ENCODE measurements at regions of chr1 and their contacts with region 1.

Region 1: DNA sequence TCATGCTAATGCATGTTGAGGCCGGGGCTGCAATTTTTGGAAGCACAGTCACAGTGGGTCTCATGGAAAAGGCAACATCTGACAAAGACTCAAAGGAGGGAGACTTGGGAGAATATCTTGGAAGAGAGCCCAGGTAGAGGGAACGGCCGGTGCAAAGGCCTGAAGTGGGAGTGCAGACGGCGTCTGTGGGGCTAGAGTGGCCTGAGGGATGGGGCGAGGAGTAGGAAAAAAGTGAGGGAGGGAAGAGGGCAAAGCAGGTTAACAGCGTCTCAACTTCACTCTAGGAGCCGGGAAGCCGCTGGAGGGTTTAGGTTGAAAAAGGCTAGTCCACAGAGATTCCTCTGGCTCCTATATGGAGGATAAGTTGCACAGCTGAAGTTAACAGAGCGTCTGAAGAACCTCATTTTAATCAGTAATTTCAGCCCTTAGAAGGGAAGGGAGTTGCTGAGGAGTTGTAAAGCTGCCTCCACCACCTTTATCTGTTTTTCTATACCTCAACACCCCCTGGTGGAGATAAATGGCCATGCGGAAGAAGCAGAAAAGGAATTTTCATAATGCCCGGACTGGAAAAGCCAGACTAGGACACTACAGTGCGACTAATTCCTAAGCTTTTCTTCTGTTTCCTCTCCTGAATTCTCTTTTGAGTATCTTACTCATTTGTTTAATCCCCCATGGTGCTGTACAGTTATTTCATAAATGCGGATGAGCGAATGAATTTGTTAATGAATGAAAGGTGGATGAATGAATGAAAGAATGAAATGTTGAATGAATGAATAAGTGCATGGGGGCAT is 78.7 kb upstream of the ZNF281 start:
- DNase-seq: peak in 1 of 2 donors; percentile 43
- ATAC-seq: peak in 6 of 8 donors; percentile 38 to 65 (median 54)
- H3K4me3 ChIP-seq: no peak overlapping the region
- H3K27ac ChIP-seq: no peak overlapping the region
- H3K4me1 ChIP-seq: peaks cover 0 to 11% (median 0%) of the 10 kb centered on the region in 9 donors
- H3K27me3 ChIP-seq: peaks cover 0 to 26% (median 8%) of the 10 kb centered on the region in 7 donors
- CTCF ChIP-seq: peak; percentile 56 to 81 (median 78)

Region 2: DNA sequence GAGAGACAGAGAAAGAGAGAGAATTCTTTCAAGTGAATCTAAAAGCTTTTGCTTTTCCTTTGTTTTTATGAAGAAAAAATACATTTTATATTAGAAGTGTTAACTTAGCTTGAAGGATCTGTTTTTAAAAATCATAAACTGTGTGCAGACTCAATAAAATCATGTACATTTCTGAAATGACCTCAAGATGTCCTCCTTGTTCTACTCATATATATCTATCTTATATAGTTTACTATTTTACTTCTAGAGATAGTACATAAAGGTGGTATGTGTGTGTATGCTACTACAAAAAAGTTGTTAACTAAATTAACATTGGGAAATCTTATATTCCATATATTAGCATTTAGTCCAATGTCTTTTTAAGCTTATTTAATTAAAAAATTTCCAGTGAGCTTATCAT is 1732.1 kb before region 1 on chr1:
- intact Hi-C with region 1: loop called in 1 of 10 experiments (anchors 5 kb)
- DNase-seq: no peak
- ATAC-seq: no peak
- H3K4me3 ChIP-seq: no peak overlapping the region
- H3K27ac ChIP-seq: no peak overlapping the region
- H3K4me1 ChIP-seq: peaks cover 0 to 7% (median 0%) of the 10 kb centered on the region in 9 donors
- H3K27me3 ChIP-seq: no peaks in the 10 kb centered on the region
- CTCF ChIP-seq: peak in 8 of 9 donors; percentile 29 to 65 (median 46)

Region 3: DNA sequence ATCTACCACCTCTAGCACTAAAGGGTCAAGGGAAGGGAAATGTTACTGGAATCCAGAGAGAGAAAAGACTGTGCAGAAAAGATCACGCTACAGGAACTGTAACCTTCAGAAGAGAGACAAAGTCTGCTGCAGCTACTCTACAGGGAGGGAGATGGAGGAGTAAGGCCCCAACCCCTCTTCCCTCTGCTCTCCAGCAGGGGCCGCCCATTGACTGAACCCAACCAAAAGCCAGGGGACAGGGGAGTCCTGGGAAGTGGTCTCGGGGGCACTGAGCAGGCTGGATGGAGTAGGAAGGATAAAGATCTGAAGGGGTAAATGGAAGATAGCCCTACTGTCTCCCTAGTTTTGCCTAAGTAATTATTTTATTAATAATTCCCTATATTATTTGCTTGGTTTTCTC is 533.9 kb before region 1 on chr1:
- intact Hi-C with region 1: loop called in 1 of 10 experiments (anchors 10 kb)
- DNase-seq: no peak
- ATAC-seq: peak in 2 of 8 donors; percentile 56 to 61
- H3K4me3 ChIP-seq: no peak overlapping the region
- H3K27ac ChIP-seq: no peak overlapping the region
- H3K4me1 ChIP-seq: no peaks in the 10 kb centered on the region
- H3K27me3 ChIP-seq: no peaks in the 10 kb centered on the region
- CTCF ChIP-seq: peak; percentile 15 to 58 (median 40)

Region 4: DNA sequence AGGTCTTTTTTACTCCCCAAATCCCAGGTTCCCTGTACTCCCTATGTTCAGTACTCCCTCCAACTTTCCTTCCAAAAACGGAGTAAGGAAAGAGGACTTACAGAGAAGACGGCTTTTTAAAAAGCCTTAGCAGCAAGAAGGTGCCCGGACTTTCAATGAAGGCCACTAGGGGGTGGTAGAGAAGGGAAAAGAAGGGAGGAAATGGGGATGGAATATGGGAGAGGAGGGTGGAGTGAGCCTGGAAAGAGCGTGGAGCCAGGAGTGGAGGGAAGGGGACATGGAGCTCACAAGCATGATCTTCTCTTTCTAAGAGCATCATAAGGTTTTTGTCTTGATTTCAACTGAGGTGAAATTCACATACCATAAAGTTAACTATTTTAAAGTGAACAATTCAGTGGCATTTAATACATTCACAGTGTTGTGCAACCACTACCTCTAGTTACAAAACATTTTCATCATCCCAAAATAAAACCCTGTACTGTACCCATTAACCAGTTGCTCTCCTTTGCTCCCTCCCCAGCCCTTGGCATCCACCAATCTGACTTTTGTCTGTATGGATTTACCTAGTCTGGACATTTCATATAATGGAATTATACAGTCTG is 208.7 kb before region 1 on chr1:
- intact Hi-C with region 1: loop called in 4 of 10 experiments (anchors 2 to 10 kb)
- DNase-seq: peak in 1 of 2 donors; percentile 16
- ATAC-seq: no peak
- H3K4me3 ChIP-seq: no peak overlapping the region
- H3K27ac ChIP-seq: no peak overlapping the region
- H3K4me1 ChIP-seq: peaks cover 0 to 9% (median 0%) of the 10 kb centered on the region in 9 donors
- H3K27me3 ChIP-seq: peaks cover 0 to 4% (median 0%) of the 10 kb centered on the region in 7 donors
- CTCF ChIP-seq: peak; percentile 17 to 66 (median 53)

Region 5: DNA sequence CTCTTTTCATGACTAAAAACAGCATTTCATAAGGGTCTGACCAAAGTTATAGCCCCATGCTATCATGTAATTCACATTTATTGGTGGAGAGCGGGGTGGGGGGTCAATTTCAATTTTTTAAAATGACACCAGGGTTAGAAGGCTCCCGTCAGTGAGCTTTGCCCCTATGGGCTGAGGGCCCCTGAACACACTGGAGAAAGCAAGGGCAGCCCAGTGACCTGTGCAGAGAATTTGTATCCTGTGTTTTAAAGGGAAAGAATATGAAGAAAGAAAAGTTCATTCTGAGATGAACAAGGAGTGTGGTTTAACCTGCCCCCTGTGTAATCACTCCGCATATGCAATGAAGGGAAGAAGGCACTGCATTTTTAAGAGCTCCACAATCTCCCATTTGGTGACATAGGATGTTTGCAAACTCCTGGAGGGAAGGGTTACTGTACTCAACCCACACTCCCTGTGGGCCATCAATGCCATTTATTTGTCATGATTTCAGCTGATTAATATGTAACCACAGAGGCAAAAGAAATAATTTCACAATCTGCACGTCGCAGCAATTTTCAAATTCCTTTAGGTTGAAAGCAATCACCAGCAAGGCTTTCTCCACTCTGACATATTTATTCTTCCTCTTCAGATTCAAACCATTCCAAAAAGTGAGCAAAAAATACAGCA is 174.4 kb before region 1 on chr1:
- intact Hi-C with region 1: loop called in 4 of 10 experiments (anchors 5 to 10 kb)
- DNase-seq: no peak
- ATAC-seq: no peak
- H3K4me3 ChIP-seq: no peak overlapping the region
- H3K27ac ChIP-seq: no peak overlapping the region
- H3K4me1 ChIP-seq: no peaks in the 10 kb centered on the region
- H3K27me3 ChIP-seq: peaks cover 0 to 21% (median 5%) of the 10 kb centered on the region in 7 donors
- CTCF ChIP-seq: no peak

Region 6: DNA sequence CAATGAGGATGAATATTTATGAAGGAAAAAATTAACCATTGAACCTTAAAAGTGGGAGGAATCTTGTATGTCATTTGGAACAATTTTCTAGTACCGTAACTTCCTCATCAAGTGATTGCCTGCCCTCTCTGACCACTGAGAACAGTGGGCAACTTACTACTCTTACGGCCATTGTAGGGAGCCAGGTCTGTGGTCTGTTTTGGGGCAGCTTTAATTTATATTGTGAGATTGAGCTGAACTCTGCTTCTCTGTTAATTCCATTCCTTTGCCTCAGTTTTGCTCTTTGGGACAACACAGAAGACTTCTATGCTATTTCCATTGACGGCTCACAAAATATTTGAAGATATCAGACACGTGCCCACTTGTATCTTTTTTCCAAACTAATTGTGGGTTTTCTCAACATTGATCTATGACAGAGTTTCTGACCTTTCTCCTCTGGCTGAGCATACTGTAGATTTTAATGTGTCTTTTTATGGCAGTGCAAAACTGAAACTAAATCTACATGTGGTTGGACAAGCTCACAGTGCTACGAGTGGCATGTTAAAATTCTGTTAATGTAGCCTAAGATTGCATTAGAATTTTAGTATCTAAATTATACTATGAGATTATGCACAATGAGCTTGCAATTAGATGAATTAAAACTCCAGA is 50.9 kb before region 1 on chr1:
- intact Hi-C with region 1: no loop called
- DNase-seq: no peak
- ATAC-seq: no peak
- H3K4me3 ChIP-seq: peak overlapping the region in 3 of 10 donors; percentile 1 to 11 (median 6)
- H3K27ac ChIP-seq: no peak overlapping the region
- H3K4me1 ChIP-seq: no peaks in the 10 kb centered on the region
- H3K27me3 ChIP-seq: no peaks in the 10 kb centered on the region
- CTCF ChIP-seq: no peak

Measured in heart right ventricle (tissue), 16 donors.